ENCODE measurements at regions of chr5 and their contacts with region 1.

Region 1: DNA sequence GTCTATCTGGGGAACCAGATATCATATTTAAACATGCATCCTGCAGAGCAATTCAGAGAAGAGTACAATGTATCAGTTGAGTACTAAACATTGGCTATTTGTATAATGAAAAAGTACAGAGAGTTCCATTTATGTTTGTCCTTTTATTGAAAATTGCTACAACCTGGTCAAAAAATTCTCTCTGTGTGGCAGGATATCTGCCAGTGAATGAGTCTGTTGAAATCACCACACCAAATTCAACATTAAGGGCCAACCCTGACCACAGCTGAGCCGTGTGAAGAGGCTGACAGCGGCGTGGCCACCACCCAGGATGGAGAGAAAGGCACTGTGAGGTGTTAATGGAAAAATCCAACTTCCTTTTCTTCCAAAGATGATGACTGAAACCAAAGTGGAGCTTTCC is 422.7 kb upstream of the PIK3R1 start:
- DNase-seq: no peak
- H3K4me3 ChIP-seq: no peak overlapping the region
- H3K27ac ChIP-seq: no peak overlapping the region
- H3K4me1 ChIP-seq: peaks cover 0 to 7% of the 10 kb centered on the region in 2 donors
- H3K27me3 ChIP-seq: no peaks in the 10 kb centered on the region
- CTCF ChIP-seq: no peak
- POLR2A ChIP-seq: no peak

Region 2: DNA sequence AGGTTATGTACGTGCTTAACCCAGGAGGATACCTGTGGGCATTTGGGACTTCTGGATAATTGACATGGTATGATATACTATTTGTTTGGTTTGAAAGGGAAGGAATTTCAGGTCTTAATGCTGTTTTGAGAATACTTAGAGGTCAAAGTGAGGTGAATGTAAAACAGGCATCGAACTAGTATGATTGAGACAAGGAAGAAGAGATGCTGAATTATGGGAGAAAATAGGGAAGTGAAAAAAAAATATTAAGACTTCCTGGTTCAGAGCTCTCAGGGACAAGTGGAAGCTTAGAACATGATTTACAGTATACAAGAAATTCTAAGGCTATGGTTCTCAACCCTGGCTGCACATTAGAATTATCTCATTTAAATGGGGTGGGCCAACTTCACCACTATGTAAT is 711.6 kb before region 1 on chr5:
- intact Hi-C with region 1: no loop called
- DNase-seq: no peak
- H3K4me3 ChIP-seq: no peak overlapping the region
- H3K27ac ChIP-seq: no peak overlapping the region
- H3K4me1 ChIP-seq: no peaks in the 10 kb centered on the region
- H3K27me3 ChIP-seq: no peaks in the 10 kb centered on the region
- CTCF ChIP-seq: no peak
- POLR2A ChIP-seq: no peak

Region 3: GRCh38 chr5:67699560-67699959 is 93.3 kb before region 1 on chr5:
- intact Hi-C with region 1: loop called in 1 of 2 experiments (anchors 5 kb)
- DNase-seq: no peak
- H3K4me3 ChIP-seq: no peak overlapping the region
- H3K27ac ChIP-seq: no peak overlapping the region
- H3K4me1 ChIP-seq: peaks cover 0 to 9% of the 10 kb centered on the region in 2 donors
- H3K27me3 ChIP-seq: no peaks in the 10 kb centered on the region
- CTCF ChIP-seq: no peak
- POLR2A ChIP-seq: no peak